H1 (cell line): ENCODE measurements at regions of chr13 and their contacts with region 1.

Region 1: DNA sequence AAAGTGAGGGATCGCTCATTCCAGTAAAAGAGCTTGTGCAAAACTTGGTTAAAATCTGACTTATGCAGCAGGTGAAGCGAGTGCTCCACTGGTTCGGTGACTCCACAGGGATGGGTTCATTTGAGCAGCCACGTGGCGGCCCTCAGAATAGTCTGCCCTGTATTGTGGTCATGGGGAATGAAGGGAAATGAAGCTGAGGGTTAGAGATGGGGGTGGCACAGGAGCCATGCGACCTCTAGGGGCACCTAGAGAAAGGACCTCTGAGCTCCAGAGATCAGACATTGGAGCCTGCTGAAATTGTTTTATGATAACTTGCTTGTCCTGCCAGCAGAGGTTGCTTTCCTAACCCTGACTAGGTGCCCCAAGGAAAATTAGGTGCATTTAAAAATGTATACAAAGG is 26.6 kb downstream of the CBY2 start:
- DNase-seq: peak; percentile 36 to 56
- H3K4me3 ChIP-seq: no peak overlapping the region
- H3K27ac ChIP-seq: no peak overlapping the region
- H3K4me1 ChIP-seq: peaks cover 0 to 2% (median under 1%) of the 10 kb centered on the region in 4 experiments; a peak in 2 of 7 replicates
- H3K27me3 ChIP-seq: peaks cover 0 to 4% (median 0%) of the 10 kb centered on the region in 4 experiments; a peak in 2 of 7 replicates
- CTCF ChIP-seq: peak; percentile 65 to 89 (median 72)
- EP300 ChIP-seq: no peak
- POLR2A ChIP-seq: no peak
- RAD21 ChIP-seq: peak; percentile 80 to 84

Region 2: DNA sequence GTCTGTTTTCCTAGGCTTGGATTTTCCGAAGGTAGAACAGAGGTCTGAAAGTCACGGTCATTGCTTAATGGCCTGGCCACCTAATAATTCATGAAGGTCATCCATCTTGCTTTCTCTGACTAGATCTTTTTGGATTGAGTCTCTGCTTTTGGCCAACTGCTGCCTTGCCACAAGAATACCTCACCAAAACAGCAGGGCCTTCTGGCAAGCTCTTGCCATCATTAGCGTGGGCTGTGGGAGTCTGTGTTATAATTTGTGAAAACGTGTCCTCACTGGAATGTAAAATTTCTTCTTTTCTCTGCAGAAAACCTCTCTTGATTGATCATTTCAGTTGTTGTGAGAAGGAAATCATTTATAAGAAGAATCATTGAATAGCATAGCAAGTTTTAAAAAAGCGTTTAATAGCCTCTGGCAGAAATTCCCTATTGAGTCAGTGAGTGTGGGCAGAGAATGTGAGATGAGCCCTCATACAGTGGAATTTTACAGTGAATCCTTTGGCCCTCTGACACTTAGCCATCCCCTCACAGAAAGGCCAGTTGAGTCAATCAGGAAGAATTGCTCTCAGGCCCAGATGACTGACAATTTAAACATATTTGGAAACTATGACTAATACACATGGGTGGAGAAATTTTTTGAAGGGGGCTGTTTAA is 70.0 kb before region 1 on chr13:
- CTCF ChIA-PET with region 1: no interaction called
- POLR2A ChIA-PET with region 1: no interaction called
- DNase-seq: no peak
- H3K4me3 ChIP-seq: no peak overlapping the region
- H3K27ac ChIP-seq: no peak overlapping the region
- H3K4me1 ChIP-seq: no peaks in the 10 kb centered on the region
- H3K27me3 ChIP-seq: no peaks in the 10 kb centered on the region
- CTCF ChIP-seq: no peak
- EP300 ChIP-seq: no peak
- POLR2A ChIP-seq: no peak
- RAD21 ChIP-seq: no peak

Region 3: GRCh38 chr13:45718063-45718462 is 10.7 kb before region 1 on chr13:
- CTCF ChIA-PET with region 1: interaction called, 19 read pairs
- POLR2A ChIA-PET with region 1: interaction called, 3 read pairs
- DNase-seq: no peak
- H3K4me3 ChIP-seq: no peak overlapping the region
- H3K27ac ChIP-seq: no peak overlapping the region
- H3K4me1 ChIP-seq: peaks cover 0 to under 1% (median 0%) of the 10 kb centered on the region in 4 experiments; a peak in 1 of 7 replicates
- H3K27me3 ChIP-seq: no peaks in the 10 kb centered on the region; a peak in 1 of 7 replicates
- CTCF ChIP-seq: peak; percentile 7 to 86 (median 84)
- EP300 ChIP-seq: no peak
- POLR2A ChIP-seq: no peak
- RAD21 ChIP-seq: peak; percentile 87 to 90